GM12878 (cell line): ENCODE measurements at regions of chr5 and their contacts with region 1.

Region 1: GRCh38 chr5:73307645-73308355 is 134.8 kb downstream of the TMEM174 start:
- DNase-seq: no peak
- ATAC-seq: no peak
- H3K4me3 ChIP-seq: no peak overlapping the region
- H3K27ac ChIP-seq: no peak overlapping the region
- H3K4me1 ChIP-seq: no peaks in the 10 kb centered on the region
- H3K27me3 ChIP-seq: peaks cover 8 to 9% of the 10 kb centered on the region in 2 experiments
- CTCF ChIP-seq: no peak
- EP300 ChIP-seq: no peak
- POLR2A ChIP-seq: no peak
- RAD21 ChIP-seq: no peak

Region 2: GRCh38 chr5:73160239-73160671 is 147.5 kb before region 1 on chr5:
- CTCF ChIA-PET with region 1: no interaction called
- POLR2A ChIA-PET with region 1: no interaction called
- RAD21 ChIA-PET with region 1: no interaction called
- SMC1A ChIA-PET with region 1: no interaction called
- in situ Hi-C with region 1: no loop called
- intact Hi-C with region 1: no loop called
- DNase-seq: peak; percentile 62
- ATAC-seq: peak; percentile 96
- H3K4me3 ChIP-seq: no peak overlapping the region
- H3K27ac ChIP-seq: no peak overlapping the region
- H3K4me1 ChIP-seq: 0 out of 2 replicates have a peak, but pooled peaks cover 5% of the 10 kb centered on the region
- H3K27me3 ChIP-seq: peaks cover 0 to 3% of the 10 kb centered on the region in 2 experiments; a peak in 2 of 4 replicates
- CTCF ChIP-seq: no peak
- EP300 ChIP-seq: peak; percentile 55 to 82
- POLR2A ChIP-seq: no peak
- RAD21 ChIP-seq: no peak

Region 3: DNA sequence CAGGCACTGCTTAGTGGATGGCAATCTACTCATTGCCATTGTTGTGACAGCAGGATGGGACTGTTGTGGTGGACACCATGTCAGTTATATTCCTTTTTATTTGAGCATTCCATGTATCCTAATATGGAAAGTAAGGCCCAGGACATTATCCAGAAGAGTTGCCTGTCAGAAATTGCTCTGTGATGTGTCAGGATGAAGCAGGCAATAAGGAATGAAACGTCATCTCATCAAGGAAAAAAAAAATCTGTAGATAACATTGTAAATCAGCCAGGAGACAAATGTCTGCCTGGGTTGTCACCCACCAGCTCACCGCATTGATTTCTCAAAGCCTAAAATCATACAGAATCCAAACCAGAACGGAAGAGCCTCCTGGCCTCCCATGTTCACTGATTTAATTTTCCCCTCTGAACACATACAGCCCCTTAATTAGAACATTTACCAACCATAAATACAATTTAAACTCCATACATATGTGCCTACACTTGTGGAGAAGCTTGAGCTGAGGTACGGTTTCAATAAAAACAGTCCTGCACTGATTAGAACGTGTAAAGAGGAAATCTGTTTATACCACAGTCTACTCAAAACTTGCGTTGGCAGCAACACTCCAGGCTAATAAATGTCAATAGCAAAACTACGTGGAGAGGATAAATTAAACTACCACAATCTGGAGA is 66.9 kb after region 1 on chr5:
- CTCF ChIA-PET with region 1: no interaction called
- POLR2A ChIA-PET with region 1: no interaction called
- RAD21 ChIA-PET with region 1: no interaction called
- SMC1A ChIA-PET with region 1: no interaction called
- in situ Hi-C with region 1: no loop called
- intact Hi-C with region 1: loop called (anchors 5 kb)
- DNase-seq: no peak
- ATAC-seq: no peak
- H3K4me3 ChIP-seq: no peak overlapping the region
- H3K27ac ChIP-seq: no peak overlapping the region
- H3K4me1 ChIP-seq: no peaks in the 10 kb centered on the region
- H3K27me3 ChIP-seq: peaks cover 5 to 7% of the 10 kb centered on the region in 2 experiments
- CTCF ChIP-seq: no peak
- EP300 ChIP-seq: no peak
- POLR2A ChIP-seq: no peak
- RAD21 ChIP-seq: no peak